ENCODE measurements at regions of chr5 and their contacts with region 1.

Region 1: GRCh38 chr5:66171349-66172344 is 27.5 kb downstream of the SREK1 start:
- DNase-seq: peak in 1 of 2 experiments; percentile 48
- H3K4me3 ChIP-seq: no peak overlapping the region
- H3K4me3 Mint-ChIP-seq: no peak overlapping the region
- H3K27ac Mint-ChIP-seq: no peak overlapping the region
- H3K4me1 ChIP-seq: no peaks in the 10 kb centered on the region
- H3K4me1 Mint-ChIP-seq: peaks cover 7% of the 10 kb centered on the region
- H3K27me3 ChIP-seq: no peaks in the 10 kb centered on the region
- H3K27me3 Mint-ChIP-seq: no peaks in the 10 kb centered on the region
- CTCF ChIP-seq: peak; percentile 54 to 56

Region 2: GRCh38 chr5:65986050-65986451 is 185.6 kb before region 1 on chr5:
- CTCF ChIA-PET with region 1: no interaction called
- POLR2A ChIA-PET with region 1: no interaction called
- intact Hi-C with region 1: no loop called
- DNase-seq: no peak
- H3K4me3 ChIP-seq: no peak overlapping the region
- H3K4me3 Mint-ChIP-seq: no peak overlapping the region
- H3K27ac Mint-ChIP-seq: no peak overlapping the region
- H3K4me1 ChIP-seq: no peaks in the 10 kb centered on the region
- H3K4me1 Mint-ChIP-seq: peaks cover 31% of the 10 kb centered on the region
- H3K27me3 ChIP-seq: no peaks in the 10 kb centered on the region
- H3K27me3 Mint-ChIP-seq: no peaks in the 10 kb centered on the region
- CTCF ChIP-seq: no peak

Region 3: DNA sequence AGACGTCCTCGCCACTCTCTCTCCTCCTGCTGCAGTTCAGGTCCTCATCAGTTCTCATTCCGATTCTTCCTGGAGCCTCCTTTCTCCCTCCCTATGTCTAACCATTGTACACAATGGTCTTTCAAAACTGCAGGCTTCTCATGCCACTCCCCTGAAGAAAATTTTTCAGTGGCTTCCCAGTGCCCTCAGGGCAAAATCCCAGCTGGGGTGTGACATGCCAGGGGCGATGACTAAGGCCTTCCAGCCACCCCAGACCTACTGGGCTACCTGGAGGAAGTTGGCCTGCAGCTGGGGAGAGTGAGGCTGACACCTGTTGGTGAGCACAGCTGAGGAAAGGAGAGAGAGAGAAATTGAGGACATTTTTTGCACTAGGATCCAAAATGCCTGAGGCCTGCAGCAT is 37.7 kb after region 1 on chr5:
- CTCF ChIA-PET with region 1: no interaction called
- POLR2A ChIA-PET with region 1: interaction called, 3 read pairs
- intact Hi-C with region 1: loop called (anchors 1 kb)
- DNase-seq: peak; percentile 72 to 82
- H3K4me3 ChIP-seq: no peak overlapping the region
- H3K4me3 Mint-ChIP-seq: no peak overlapping the region
- H3K27ac Mint-ChIP-seq: peak overlapping the region; percentile 72
- H3K4me1 ChIP-seq: peaks cover 12% of the 10 kb centered on the region; the same call in 1 of the 2 replicates
- H3K4me1 Mint-ChIP-seq: peaks cover 13% of the 10 kb centered on the region
- H3K27me3 ChIP-seq: no peaks in the 10 kb centered on the region
- H3K27me3 Mint-ChIP-seq: no peaks in the 10 kb centered on the region
- CTCF ChIP-seq: peak in 1 of 2 experiments; percentile 15

Region 4: GRCh38 chr5:66223636-66224035 is 52.0 kb after region 1 on chr5:
- CTCF ChIA-PET with region 1: no interaction called
- POLR2A ChIA-PET with region 1: no interaction called
- intact Hi-C with region 1: loop called (anchors 5 kb)
- DNase-seq: peak in 1 of 2 experiments; percentile 19
- H3K4me3 ChIP-seq: no peak overlapping the region
- H3K4me3 Mint-ChIP-seq: no peak overlapping the region
- H3K27ac Mint-ChIP-seq: no peak overlapping the region
- H3K4me1 ChIP-seq: no peaks in the 10 kb centered on the region
- H3K4me1 Mint-ChIP-seq: no peaks in the 10 kb centered on the region
- H3K27me3 ChIP-seq: no peaks in the 10 kb centered on the region
- H3K27me3 Mint-ChIP-seq: no peaks in the 10 kb centered on the region
- CTCF ChIP-seq: peak; percentile 20 to 28

Region 5: DNA sequence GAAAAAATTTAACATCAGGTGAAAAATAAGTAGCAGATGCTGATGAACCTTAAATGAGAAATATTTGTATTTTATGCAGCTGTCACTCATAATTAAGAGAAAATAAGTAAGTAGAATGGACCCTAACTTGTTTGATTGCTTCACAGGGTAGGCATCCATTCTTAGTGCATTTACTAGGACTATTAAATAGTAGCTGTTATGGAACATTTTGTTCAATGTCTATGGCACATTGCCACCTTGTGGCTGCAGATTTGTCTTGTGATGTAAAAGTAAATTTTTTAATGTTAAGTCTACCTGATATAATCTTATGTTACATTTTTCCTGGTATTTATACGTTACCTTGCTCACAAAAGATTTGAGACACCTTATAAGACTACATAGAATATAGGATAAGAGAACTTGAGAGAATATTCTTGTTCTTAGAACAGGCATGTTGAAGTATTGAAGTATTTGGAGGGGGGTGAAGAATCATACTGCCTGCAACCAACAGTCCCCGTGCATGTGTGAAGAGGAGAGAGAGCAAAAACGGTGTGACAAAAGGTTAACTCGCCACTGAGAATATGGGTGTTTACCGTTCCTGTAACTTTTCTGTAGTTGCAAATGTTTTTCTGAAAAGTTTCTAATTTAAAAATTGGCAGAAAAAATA is 585.7 kb after region 1 on chr5:
- CTCF ChIA-PET with region 1: no interaction called
- POLR2A ChIA-PET with region 1: no interaction called
- intact Hi-C with region 1: loop called (anchors 5 kb)
- DNase-seq: peak in 1 of 2 experiments; percentile 36
- H3K4me3 ChIP-seq: no peak overlapping the region
- H3K4me3 Mint-ChIP-seq: no peak overlapping the region
- H3K27ac Mint-ChIP-seq: no peak overlapping the region
- H3K4me1 ChIP-seq: no peaks in the 10 kb centered on the region
- H3K4me1 Mint-ChIP-seq: no peaks in the 10 kb centered on the region
- H3K27me3 ChIP-seq: no peaks in the 10 kb centered on the region
- H3K27me3 Mint-ChIP-seq: peaks cover 22% of the 10 kb centered on the region
- CTCF ChIP-seq: peak; percentile 51 to 58